B cell (primary cell): ENCODE measurements at regions of chr15 and their contacts with region 1.

Region 1: GRCh38 chr15:40906091-40906990 is 12.1 kb downstream of the VPS18 start:
- DNase-seq: peak; percentile 93
- ATAC-seq: peak; percentile 77
- H3K4me3 ChIP-seq: peak overlapping the region; percentile 46 to 95 (median 83)
- H3K4me3 Mint-ChIP-seq: peak overlapping the region; percentile 93
- H3K27ac ChIP-seq: peak overlapping the region; percentile 98 to 99
- H3K27ac Mint-ChIP-seq: peak overlapping the region; percentile 98
- H3K4me1 ChIP-seq: peaks cover 30 to 60% of the 10 kb centered on the region in 2 donors
- H3K4me1 Mint-ChIP-seq: peaks cover 48% of the 10 kb centered on the region
- H3K27me3 ChIP-seq: no peaks in the 10 kb centered on the region
- H3K27me3 Mint-ChIP-seq: no peaks in the 10 kb centered on the region
- CTCF ChIP-seq: peak; percentile 98

Region 2: DNA sequence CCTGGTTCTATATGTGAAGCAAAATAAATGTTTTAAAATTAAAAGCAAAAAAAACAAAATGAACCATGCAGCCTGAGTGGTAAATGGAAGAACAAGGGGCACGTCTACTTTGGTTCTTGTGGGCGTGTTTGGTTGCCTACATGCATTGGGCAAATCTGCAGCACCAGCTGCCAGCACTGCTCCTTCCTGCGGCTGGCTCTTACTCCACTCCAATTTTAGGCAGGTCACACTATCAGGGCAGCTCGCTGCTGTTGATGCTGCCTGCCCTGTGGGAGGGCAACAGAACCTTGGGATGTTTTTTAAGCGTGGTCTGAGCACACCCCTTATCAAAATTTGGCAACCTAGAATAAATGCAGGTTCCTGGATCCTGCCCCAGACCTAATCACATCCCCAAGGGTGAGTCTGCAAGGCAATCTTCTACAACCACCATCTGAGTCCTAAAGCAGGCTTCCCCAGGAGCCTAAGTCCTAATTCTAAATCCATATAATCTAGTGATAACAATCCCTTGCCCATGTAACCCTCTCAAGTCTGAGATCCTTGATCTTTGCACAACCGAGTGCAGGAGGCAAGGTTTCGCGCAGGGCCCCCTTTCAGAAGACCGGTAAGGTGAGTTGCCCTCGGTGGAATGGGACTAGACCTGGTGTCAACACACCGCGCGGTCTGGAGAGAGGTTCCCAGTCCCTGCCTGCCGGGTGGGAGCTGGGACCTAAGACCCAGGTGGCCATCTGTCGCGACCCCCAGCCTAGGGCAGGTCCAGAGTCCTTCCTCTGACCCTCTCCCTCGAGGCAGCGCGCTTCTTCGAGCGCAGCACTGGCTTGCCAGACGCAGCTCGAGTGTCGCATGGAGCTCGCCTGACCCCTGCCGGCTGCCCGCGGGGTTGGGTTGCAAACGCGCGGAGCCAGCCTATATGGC is 484.8 kb before region 1 on chr15:
- CTCF ChIA-PET with region 1: no interaction called
- POLR2A ChIA-PET with region 1: no interaction called
- intact Hi-C with region 1: no loop called
- DNase-seq: peak; percentile 83
- ATAC-seq: peak; percentile 96
- H3K4me3 ChIP-seq: no peak overlapping the region
- H3K4me3 Mint-ChIP-seq: no peak overlapping the region
- H3K27ac ChIP-seq: no peak overlapping the region
- H3K27ac Mint-ChIP-seq: no peak overlapping the region
- H3K4me1 ChIP-seq: peaks cover 4 to 7% of the 10 kb centered on the region in 2 donors
- H3K4me1 Mint-ChIP-seq: peaks cover 2% of the 10 kb centered on the region
- H3K27me3 ChIP-seq: no peaks in the 10 kb centered on the region
- H3K27me3 Mint-ChIP-seq: no peaks in the 10 kb centered on the region
- CTCF ChIP-seq: peak; percentile 97

Region 3: DNA sequence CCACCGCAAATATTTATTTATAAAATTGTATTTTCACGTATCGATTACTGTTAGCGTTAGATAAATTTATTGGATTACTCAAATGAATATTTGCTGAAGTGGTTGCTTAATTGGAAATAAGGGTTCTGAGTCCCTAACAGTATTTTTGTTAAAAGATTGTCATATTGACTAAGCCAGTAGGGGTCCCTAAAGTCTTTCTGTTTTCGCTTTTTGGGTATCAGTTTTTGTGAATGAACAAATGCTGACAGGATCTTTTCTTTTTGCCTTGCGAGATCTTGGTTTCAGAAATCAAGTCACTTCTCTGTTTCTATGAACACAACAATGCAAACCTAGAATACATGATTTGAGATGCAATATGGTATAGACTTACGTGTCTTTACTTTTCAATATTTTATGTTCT is 204.3 kb before region 1 on chr15:
- CTCF ChIA-PET with region 1: no interaction called
- POLR2A ChIA-PET with region 1: no interaction called
- intact Hi-C with region 1: no loop called
- DNase-seq: peak; percentile 18
- ATAC-seq: no peak
- H3K4me3 ChIP-seq: no peak overlapping the region
- H3K4me3 Mint-ChIP-seq: no peak overlapping the region
- H3K27ac ChIP-seq: no peak overlapping the region
- H3K27ac Mint-ChIP-seq: no peak overlapping the region
- H3K4me1 ChIP-seq: no peaks in the 10 kb centered on the region
- H3K4me1 Mint-ChIP-seq: no peaks in the 10 kb centered on the region
- H3K27me3 ChIP-seq: no peaks in the 10 kb centered on the region
- H3K27me3 Mint-ChIP-seq: no peaks in the 10 kb centered on the region
- CTCF ChIP-seq: peak; percentile 23

Region 4: DNA sequence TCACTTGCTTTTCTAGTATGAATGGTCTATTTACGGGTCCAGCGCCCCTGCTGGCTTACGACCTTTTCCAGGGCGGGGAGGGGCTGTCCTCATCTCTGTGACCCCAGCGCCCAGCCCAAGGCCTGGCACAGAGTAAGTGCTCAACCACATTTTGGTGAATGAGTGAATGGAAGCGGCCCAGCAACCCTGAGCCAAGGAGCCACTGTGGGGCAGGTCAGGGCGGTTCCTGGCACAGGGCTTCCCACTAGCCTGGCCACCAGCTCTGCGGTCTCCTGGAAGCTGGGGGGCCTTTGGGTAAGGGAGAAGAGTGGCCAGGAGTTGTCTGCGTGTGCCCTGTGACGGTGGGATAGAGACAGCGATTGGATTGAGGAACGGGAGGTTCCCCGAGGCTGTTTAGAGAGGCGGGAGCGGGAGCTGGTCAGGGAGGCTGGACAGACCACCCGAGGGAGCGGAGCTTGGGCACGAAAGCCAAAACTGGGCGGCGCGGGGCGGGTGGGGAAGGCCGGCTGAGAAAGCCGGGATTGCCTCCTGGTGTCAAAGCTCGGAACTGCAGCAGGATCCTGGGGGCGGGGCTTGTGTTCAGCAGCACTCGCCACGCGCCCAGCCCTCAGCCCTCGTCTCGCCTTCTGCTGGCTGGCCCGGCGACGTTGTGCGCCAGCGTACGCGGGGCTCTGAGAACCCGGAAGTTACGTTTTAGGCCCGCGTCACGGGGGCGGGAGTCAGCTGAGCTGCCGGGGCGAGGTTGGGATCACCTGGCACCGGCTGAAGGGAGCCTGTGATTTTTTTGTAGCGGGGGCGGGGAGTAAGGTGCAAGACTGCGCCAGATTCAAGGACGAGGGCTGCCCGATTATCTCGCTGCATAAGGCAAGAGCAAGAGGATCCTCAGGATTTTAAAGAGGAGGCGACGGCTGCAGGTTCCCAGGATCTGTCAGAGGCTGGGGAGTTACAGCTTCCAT is 12.3 kb before region 1 on chr15 and contains the start of gene VPS18:
- CTCF ChIA-PET with region 1: interaction called, 128 read pairs
- POLR2A ChIA-PET with region 1: interaction called, 28 read pairs
- intact Hi-C with region 1: loop called (anchors 1 kb)
- DNase-seq: peak; percentile 99
- ATAC-seq: peak; percentile 99
- H3K4me3 ChIP-seq: peak within 1 kb of the TSS; percentile 81 to 98 (median 92)
- H3K4me3 Mint-ChIP-seq: peak within 1 kb of the TSS; percentile 99
- H3K27ac ChIP-seq: peak within 1 kb of the TSS; percentile 84 to 91
- H3K27ac Mint-ChIP-seq: peak within 1 kb of the TSS; percentile 94
- H3K4me1 ChIP-seq: peaks cover 18 to 19% of the 10 kb centered on the region in 2 donors
- H3K4me1 Mint-ChIP-seq: peaks cover 28% of the 10 kb centered on the region
- H3K27me3 ChIP-seq: no peaks in the 10 kb centered on the region
- H3K27me3 Mint-ChIP-seq: no peaks in the 10 kb centered on the region
- CTCF ChIP-seq: peak; percentile 88
- total RNA-seq, gene VPS18: 29.6 TPM in 2 replicates

Region 5: GRCh38 chr15:40941528-40942336 is 35.4 kb after region 1 on chr15:
- CTCF ChIA-PET with region 1: interaction called, 69 read pairs
- POLR2A ChIA-PET with region 1: interaction called, 7 read pairs
- intact Hi-C with region 1: loop called (anchors 1 kb)
- DNase-seq: peak; percentile 82
- ATAC-seq: peak; percentile 85
- H3K4me3 ChIP-seq: peak overlapping the region; percentile 53 to 78 (median 69)
- H3K4me3 Mint-ChIP-seq: peak overlapping the region; percentile 83
- H3K27ac ChIP-seq: peak overlapping the region in 1 of 2 donors; percentile 37
- H3K27ac Mint-ChIP-seq: peak overlapping the region; percentile 75
- H3K4me1 ChIP-seq: peaks cover 31 to 35% of the 10 kb centered on the region in 2 donors
- H3K4me1 Mint-ChIP-seq: peaks cover 40% of the 10 kb centered on the region
- H3K27me3 ChIP-seq: no peaks in the 10 kb centered on the region
- H3K27me3 Mint-ChIP-seq: peaks cover 5% of the 10 kb centered on the region
- CTCF ChIP-seq: peak; percentile 66

Region 6: DNA sequence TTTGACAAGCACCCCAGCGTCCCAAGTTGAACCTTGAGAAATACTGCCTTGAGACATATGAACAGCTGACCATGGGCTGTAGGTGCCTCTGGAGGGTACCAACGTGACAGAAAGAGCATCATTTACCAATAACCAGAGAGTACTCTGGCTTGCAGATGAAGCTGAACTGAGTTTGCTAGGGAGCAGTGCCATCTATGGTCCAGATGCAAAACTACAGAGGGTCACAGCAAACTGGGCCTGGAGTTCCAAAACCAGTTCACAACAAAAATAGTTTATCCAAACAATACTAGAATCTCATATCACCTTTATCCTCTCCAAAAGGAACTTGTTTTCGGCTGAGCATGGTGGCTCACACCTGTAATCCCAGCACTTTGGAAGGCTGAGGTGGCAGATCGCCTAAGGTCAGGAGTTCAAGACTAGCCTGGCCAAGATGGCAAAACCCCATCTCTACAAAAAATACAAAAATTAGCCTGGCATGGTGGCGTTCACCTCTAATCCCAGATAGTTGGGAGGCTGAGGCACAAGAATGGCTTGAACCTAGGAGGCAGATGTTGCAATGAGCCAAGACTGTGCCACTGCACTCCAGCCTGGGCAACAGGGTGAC is 116.2 kb after region 1 on chr15:
- CTCF ChIA-PET with region 1: interaction called, 176 read pairs
- POLR2A ChIA-PET with region 1: interaction called, 4 read pairs
- intact Hi-C with region 1: loop called (anchors 1 kb)
- DNase-seq: peak; percentile 64
- ATAC-seq: peak; percentile 63
- H3K4me3 ChIP-seq: no peak overlapping the region
- H3K4me3 Mint-ChIP-seq: no peak overlapping the region
- H3K27ac ChIP-seq: no peak overlapping the region
- H3K27ac Mint-ChIP-seq: no peak overlapping the region
- H3K4me1 ChIP-seq: no peaks in the 10 kb centered on the region
- H3K4me1 Mint-ChIP-seq: no peaks in the 10 kb centered on the region
- H3K27me3 ChIP-seq: no peaks in the 10 kb centered on the region
- H3K27me3 Mint-ChIP-seq: no peaks in the 10 kb centered on the region
- CTCF ChIP-seq: peak; percentile 74

Region 7: GRCh38 chr15:41207687-41208448 is 301.5 kb after region 1 on chr15:
- CTCF ChIA-PET with region 1: no interaction called
- POLR2A ChIA-PET with region 1: no interaction called
- intact Hi-C with region 1: no loop called
- DNase-seq: no peak
- ATAC-seq: no peak
- H3K4me3 ChIP-seq: no peak overlapping the region
- H3K4me3 Mint-ChIP-seq: no peak overlapping the region
- H3K27ac ChIP-seq: no peak overlapping the region
- H3K27ac Mint-ChIP-seq: no peak overlapping the region
- H3K4me1 ChIP-seq: no peaks in the 10 kb centered on the region
- H3K4me1 Mint-ChIP-seq: no peaks in the 10 kb centered on the region
- H3K27me3 ChIP-seq: peaks cover 0 to 3% (median 0%) of the 10 kb centered on the region in 4 experiments
- H3K27me3 Mint-ChIP-seq: peaks cover 9% of the 10 kb centered on the region
- CTCF ChIP-seq: no peak

Region 8: DNA sequence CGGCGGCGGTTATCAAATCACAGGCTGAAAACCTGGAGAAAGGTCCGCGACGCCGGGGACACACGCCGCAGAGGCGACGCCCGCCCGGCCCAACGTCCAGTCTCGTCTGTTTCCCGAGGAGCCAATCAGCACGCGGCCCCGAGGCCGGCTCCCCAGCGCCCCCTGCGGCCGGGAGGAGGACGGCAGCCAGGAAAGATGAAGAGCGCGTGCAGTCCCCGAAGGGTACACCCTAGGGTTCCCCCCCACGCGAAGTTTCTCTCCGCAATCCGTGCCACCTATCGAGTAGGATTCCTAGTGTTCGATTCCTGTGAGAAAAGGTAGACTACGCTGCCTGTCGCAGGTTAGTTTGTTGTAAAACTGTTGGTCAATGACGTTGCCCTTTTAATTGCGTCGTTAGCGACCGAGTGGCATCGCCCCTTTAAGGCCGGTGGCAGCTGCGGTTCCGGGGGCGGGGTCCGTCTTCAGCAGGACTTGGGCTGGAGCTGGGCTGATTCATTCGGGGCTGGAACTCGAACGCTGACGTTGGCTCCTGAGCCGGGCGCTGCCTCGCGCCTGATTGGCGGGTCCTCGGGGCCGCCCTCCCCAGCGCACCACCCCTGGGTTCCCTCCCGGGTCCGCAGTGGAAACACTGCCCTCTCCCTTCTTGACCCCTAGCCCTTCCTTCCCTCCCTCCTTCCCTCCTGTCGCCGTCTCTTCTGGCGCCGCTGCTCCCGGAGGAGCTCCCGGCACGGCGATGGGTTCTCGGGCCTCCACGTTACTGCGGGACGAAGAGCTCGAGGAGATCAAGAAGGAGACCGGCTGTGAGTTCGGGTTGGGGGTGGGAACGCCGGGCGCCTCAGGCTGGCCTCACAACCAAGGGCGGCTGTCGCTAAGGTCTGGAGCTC is 324.6 kb after region 1 on chr15 and contains the starts of genes CHP1 and EXD1:
- CTCF ChIA-PET with region 1: interaction called, 5 read pairs
- POLR2A ChIA-PET with region 1: interaction called, 5 read pairs
- intact Hi-C with region 1: loop called (anchors 2 kb)
- DNase-seq: peak; percentile 97
- ATAC-seq: peak; percentile 97
- H3K4me3 ChIP-seq: peak within 1 kb of the TSS; percentile 80 to 94 (median 88)
- H3K4me3 Mint-ChIP-seq: peak within 1 kb of the TSS; percentile 95
- H3K27ac ChIP-seq: peak within 1 kb of the TSS; percentile 81 to 88
- H3K27ac Mint-ChIP-seq: peak within 1 kb of the TSS; percentile 95
- H3K4me1 ChIP-seq: peaks cover 18 to 24% of the 10 kb centered on the region in 2 donors
- H3K4me1 Mint-ChIP-seq: peaks cover 30% of the 10 kb centered on the region
- H3K27me3 ChIP-seq: no peaks in the 10 kb centered on the region
- H3K27me3 Mint-ChIP-seq: no peaks in the 10 kb centered on the region
- CTCF ChIP-seq: peak; percentile 95
- total RNA-seq, gene CHP1: 39.9 and 40.8 TPM in 2 replicates
- total RNA-seq, gene EXD1: not detected in 2 replicates

Region 9: DNA sequence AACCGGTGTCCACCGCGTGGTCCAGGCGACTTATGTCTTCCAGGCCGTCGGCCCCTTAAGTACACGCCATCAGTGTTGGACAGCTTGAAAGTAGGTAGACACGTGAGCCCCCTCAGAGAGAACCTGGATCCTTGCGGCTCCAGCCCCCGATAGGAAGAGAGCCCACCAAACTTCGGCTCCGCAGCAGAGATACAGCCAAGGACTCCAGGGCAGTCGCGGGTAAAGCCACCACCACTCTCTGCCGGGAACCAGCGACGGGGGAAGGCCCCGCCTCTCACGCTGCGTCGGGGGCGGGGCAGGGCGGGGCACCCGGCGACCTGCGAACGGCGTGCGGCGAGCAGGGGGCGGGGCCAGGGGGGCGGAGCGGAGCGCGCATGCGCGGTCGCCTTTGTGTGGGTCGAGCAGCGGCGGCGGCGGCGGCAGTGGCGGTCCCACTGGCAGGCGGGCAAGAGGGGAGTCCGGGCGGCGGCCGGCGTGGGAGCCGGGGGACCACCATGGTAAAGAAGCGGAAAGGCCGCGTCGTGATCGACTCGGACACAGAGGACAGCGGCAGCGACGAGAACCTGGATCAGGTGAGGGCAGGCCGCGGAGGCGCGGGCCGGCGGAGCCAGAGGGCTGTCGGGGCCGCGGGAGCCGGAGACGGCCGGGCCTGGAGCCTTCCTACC is 510.5 kb after region 1 on chr15 and contains the start of gene RTF1:
- CTCF ChIA-PET with region 1: no interaction called
- POLR2A ChIA-PET with region 1: no interaction called
- intact Hi-C with region 1: loop called (anchors 10 kb)
- DNase-seq: peak; percentile 97
- ATAC-seq: peak; percentile 98
- H3K4me3 ChIP-seq: peak within 1 kb of the TSS; percentile 70 to 90 (median 86)
- H3K4me3 Mint-ChIP-seq: peak within 1 kb of the TSS; percentile 97
- H3K27ac ChIP-seq: peak within 1 kb of the TSS; percentile 55 to 83
- H3K27ac Mint-ChIP-seq: peak within 1 kb of the TSS; percentile 93
- H3K4me1 ChIP-seq: peaks cover 14 to 24% of the 10 kb centered on the region in 2 donors
- H3K4me1 Mint-ChIP-seq: peaks cover 37% of the 10 kb centered on the region
- H3K27me3 ChIP-seq: no peaks in the 10 kb centered on the region
- H3K27me3 Mint-ChIP-seq: no peaks in the 10 kb centered on the region
- CTCF ChIP-seq: no peak
- total RNA-seq, gene RTF1: 39.4 and 45.0 TPM in 2 replicates

Region 10: GRCh38 chr15:41811432-41812195 is 905.3 kb after region 1 on chr15:
- CTCF ChIA-PET with region 1: interaction called, 16 read pairs
- POLR2A ChIA-PET with region 1: no interaction called
- intact Hi-C with region 1: no loop called
- DNase-seq: peak; percentile 82
- ATAC-seq: peak; percentile 92
- H3K4me3 ChIP-seq: no peak overlapping the region
- H3K4me3 Mint-ChIP-seq: no peak overlapping the region
- H3K27ac ChIP-seq: no peak overlapping the region
- H3K27ac Mint-ChIP-seq: no peak overlapping the region
- H3K4me1 ChIP-seq: peaks cover 5 to 20% of the 10 kb centered on the region in 2 donors
- H3K4me1 Mint-ChIP-seq: peaks cover 10% of the 10 kb centered on the region
- H3K27me3 ChIP-seq: no peaks in the 10 kb centered on the region
- H3K27me3 Mint-ChIP-seq: no peaks in the 10 kb centered on the region
- CTCF ChIP-seq: peak; percentile 88